T-cell (primary cell): ENCODE measurements at regions of chrX and their contacts with region 1.

Region 1: DNA sequence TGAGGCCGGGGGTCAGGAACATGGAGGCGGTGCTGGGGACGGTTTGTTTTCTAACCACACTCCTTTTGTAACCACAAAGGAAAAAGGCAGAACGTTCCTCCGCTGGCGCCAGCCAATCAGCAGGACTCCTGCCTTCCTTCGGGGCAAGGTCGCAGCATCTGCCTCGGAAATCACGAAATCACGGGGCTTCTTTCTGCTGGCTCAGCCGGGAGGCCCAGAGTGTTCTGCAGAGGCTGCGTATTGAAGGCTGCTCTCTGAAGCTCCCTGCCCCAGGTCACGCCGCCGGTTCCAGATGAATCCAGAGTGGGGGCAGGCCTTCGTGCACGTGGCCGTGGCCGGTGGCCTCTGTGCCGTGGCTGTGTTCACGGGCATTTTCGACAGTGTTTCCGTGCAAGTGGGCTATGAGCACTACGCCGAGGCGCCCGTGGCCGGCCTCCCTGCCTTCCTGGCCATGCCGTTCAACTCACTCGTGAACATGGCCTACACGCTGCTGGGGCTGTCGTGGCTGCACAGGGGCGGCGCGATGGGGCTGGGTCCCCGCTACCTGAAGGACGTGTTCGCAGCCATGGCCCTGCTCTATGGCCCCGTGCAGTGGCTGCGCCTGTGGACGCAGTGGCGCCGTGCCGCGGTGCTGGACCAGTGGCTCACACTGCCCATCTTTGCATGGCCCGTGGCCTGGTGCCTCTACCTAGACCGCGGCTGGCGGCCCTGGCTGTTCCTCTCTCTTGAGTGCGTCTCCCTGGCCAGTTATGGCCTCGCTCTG is 9.4 kb downstream of the TMEM187 start:
- DNase-seq: peak in 34 of 35 experiments; percentile 30 to 74 (median 46)
- ATAC-seq: peak; percentile 54 to 63 (median 58)
- H3K4me3 ChIP-seq: peak overlapping the region in 1 of 2 donors; percentile 25
- H3K4me3 Mint-ChIP-seq: peak overlapping the region; percentile 74 to 77 (median 75)
- H3K27ac ChIP-seq: peak overlapping the region; percentile 93
- H3K27ac Mint-ChIP-seq: peak overlapping the region; percentile 95 to 98
- H3K4me1 ChIP-seq: peaks cover 17 to 70% of the 10 kb centered on the region in 2 experiments
- H3K4me1 Mint-ChIP-seq: peaks cover 34 to 54% (median 45%) of the 10 kb centered on the region in 3 donors
- H3K27me3 ChIP-seq: no peaks in the 10 kb centered on the region
- H3K27me3 Mint-ChIP-seq: peaks cover 0 to 3% of the 10 kb centered on the region in 2 donors

Region 2: DNA sequence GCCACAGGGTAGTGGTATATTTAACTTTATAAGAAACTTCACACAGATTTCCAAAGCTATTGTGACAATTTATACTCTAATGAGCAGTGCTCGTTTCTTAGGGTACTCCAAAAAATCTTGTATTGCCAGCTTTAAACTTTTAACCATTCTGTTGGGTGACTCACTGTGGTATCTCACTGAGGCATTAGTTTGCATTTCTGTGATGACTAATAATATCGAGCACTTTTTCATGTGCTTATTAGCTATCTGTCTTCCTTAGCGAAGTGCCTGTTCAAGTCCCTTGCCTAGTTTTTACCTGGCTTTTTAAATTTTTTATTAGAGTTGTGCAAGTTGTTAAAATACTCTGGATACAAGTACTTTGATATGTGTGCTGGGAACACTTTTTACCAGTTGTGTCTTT is 920.2 kb before region 1 on chrX:
- CTCF ChIA-PET with region 1: no interaction called
- POLR2A ChIA-PET with region 1: no interaction called
- DNase-seq: no peak
- ATAC-seq: no peak
- H3K4me3 ChIP-seq: no peak overlapping the region
- H3K4me3 Mint-ChIP-seq: no peak overlapping the region
- H3K27ac ChIP-seq: no peak overlapping the region
- H3K27ac Mint-ChIP-seq: no peak overlapping the region
- H3K4me1 ChIP-seq: no peaks in the 10 kb centered on the region
- H3K4me1 Mint-ChIP-seq: no peaks in the 10 kb centered on the region
- H3K27me3 ChIP-seq: peaks cover 0 to 6% of the 10 kb centered on the region in 2 experiments
- H3K27me3 Mint-ChIP-seq: peaks cover 0 to 4% of the 10 kb centered on the region in 2 donors

Region 3: DNA sequence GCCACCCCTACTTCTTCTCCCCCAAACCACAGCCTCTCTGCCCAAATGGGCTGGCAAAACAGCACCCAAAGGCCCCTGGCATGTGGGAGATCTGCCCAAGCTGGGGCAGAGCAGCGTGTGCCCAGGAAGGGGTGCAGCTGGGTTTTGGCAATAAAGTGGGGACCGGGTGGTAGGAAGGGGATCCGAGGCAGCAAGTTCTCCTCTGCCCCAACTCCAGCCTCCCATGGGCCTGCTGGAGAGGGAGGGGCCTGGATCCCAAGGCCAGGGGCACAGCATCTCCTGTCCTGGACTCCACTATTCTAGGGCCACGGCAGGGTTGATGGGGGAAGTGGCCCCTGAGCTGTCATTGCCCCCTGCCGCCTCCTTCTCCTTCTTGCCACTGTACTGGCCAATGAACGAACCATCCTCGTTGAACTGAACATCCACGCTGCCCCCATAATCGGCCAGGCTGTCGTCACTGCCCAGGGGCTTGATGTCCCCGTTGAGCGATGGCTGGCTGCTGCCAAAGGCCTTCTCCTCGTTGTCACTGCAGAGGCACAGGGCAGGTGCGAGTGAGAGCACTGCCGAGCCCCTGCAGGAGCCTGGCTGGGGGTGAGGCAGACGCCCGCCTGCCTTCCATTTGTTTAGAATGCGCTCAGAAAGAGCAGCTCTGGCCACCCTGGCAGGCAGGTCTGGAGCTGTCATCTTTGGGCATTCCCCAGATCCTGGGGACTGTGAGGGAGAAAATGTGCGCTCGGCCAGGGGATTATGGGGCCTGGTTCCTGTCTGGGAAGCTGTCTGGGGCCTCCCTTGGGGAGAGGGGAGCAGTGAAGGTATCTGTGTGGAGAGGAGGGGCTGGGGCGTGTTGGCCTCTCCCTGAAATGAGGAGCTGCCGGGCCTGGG is 119.3 kb before region 1 on chrX:
- CTCF ChIA-PET with region 1: no interaction called
- POLR2A ChIA-PET with region 1: no interaction called
- DNase-seq: no peak
- ATAC-seq: no peak
- H3K4me3 ChIP-seq: no peak overlapping the region
- H3K4me3 Mint-ChIP-seq: no peak overlapping the region
- H3K27ac ChIP-seq: no peak overlapping the region
- H3K27ac Mint-ChIP-seq: no peak overlapping the region
- H3K4me1 ChIP-seq: peaks cover 2 to 3% of the 10 kb centered on the region in 2 experiments
- H3K4me1 Mint-ChIP-seq: peaks cover 2 to 4% (median 2%) of the 10 kb centered on the region in 3 donors
- H3K27me3 ChIP-seq: peaks cover 0 to 7% of the 10 kb centered on the region in 2 experiments
- H3K27me3 Mint-ChIP-seq: peaks cover 0 to 14% of the 10 kb centered on the region in 2 donors

Region 4: GRCh38 chrX:153941336-153942252 is 40.4 kb before region 1 on chrX:
- CTCF ChIA-PET with region 1: no interaction called
- POLR2A ChIA-PET with region 1: no interaction called
- DNase-seq: no peak
- ATAC-seq: no peak
- H3K4me3 ChIP-seq: no peak overlapping the region
- H3K4me3 Mint-ChIP-seq: peak overlapping the region; percentile 28 to 48 (median 47)
- H3K27ac ChIP-seq: no peak overlapping the region
- H3K27ac Mint-ChIP-seq: peak overlapping the region; percentile 49 to 59
- H3K4me1 ChIP-seq: peaks cover 3 to 39% of the 10 kb centered on the region in 2 experiments
- H3K4me1 Mint-ChIP-seq: peaks cover 12 to 19% (median 15%) of the 10 kb centered on the region in 3 donors
- H3K27me3 ChIP-seq: no peaks in the 10 kb centered on the region
- H3K27me3 Mint-ChIP-seq: peaks cover 0 to 2% of the 10 kb centered on the region in 2 donors

Region 5: DNA sequence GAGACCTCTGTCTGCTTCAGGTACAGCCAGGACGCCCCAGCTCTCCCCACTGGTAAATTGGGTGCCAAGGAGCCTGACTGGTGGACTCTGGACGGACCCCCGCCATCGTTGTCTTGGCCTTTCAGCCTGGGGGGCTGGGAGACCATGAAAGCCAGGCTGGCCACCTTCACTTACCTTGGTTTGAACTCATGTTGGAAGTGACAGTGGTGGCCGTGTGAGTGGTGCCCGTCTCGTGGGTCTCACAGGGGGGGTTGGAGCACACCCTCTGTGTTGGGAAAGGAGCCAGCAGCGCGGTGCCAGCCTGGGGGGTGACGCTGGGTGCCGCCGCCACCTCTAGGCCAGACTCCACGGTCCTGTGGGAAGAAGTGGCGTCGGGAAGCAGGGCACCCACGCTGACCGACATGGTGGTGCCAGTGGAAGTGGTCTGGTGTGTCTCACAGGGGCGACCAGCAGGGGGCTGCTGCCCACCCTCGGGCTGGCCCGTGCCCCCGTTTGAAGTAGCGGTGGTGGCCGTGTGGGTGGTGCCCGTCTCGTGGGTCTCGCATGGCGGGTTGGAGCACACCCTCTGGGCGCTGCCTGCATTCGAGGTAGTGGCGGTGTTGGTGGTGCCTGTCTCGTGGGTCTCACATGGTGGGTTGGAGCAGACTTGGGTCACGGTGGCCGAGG is 27.9 kb before region 1 on chrX:
- CTCF ChIA-PET with region 1: no interaction called
- POLR2A ChIA-PET with region 1: no interaction called
- DNase-seq: no peak
- ATAC-seq: peak in 1 of 4 experiments; percentile 4
- H3K4me3 ChIP-seq: no peak overlapping the region
- H3K4me3 Mint-ChIP-seq: peak overlapping the region in 1 of 3 donors; percentile 9
- H3K27ac ChIP-seq: peak overlapping the region; percentile 18
- H3K27ac Mint-ChIP-seq: no peak overlapping the region
- H3K4me1 ChIP-seq: peaks cover 0 to 20% of the 10 kb centered on the region in 2 experiments
- H3K4me1 Mint-ChIP-seq: peaks cover 5 to 8% (median 6%) of the 10 kb centered on the region in 3 donors
- H3K27me3 ChIP-seq: no peaks in the 10 kb centered on the region
- H3K27me3 Mint-ChIP-seq: no peaks in the 10 kb centered on the region

Region 6: GRCh38 chrX:154068560-154068959 is 86.6 kb after region 1 on chrX:
- CTCF ChIA-PET with region 1: no interaction called
- POLR2A ChIA-PET with region 1: interaction called, 10 to 12 read pairs
- DNase-seq: no peak
- ATAC-seq: no peak
- H3K4me3 ChIP-seq: no peak overlapping the region
- H3K4me3 Mint-ChIP-seq: no peak overlapping the region
- H3K27ac ChIP-seq: no peak overlapping the region
- H3K27ac Mint-ChIP-seq: no peak overlapping the region
- H3K4me1 ChIP-seq: peaks cover 3 to 51% of the 10 kb centered on the region in 2 experiments
- H3K4me1 Mint-ChIP-seq: peaks cover 58 to 75% (median 60%) of the 10 kb centered on the region in 3 donors
- H3K27me3 ChIP-seq: no peaks in the 10 kb centered on the region
- H3K27me3 Mint-ChIP-seq: peaks cover 0 to 5% of the 10 kb centered on the region in 2 donors

Region 7: GRCh38 chrX:154074199-154074598 is 92.2 kb after region 1 on chrX:
- CTCF ChIA-PET with region 1: no interaction called
- POLR2A ChIA-PET with region 1: interaction called in 1 of 2 experiments, 10 read pairs
- DNase-seq: no peak
- ATAC-seq: no peak
- H3K4me3 ChIP-seq: no peak overlapping the region
- H3K4me3 Mint-ChIP-seq: no peak overlapping the region
- H3K27ac ChIP-seq: no peak overlapping the region
- H3K27ac Mint-ChIP-seq: no peak overlapping the region
- H3K4me1 ChIP-seq: peaks cover 3 to 21% of the 10 kb centered on the region in 2 experiments
- H3K4me1 Mint-ChIP-seq: peaks cover 56 to 73% (median 67%) of the 10 kb centered on the region in 3 donors
- H3K27me3 ChIP-seq: no peaks in the 10 kb centered on the region
- H3K27me3 Mint-ChIP-seq: peaks cover 0 to 10% of the 10 kb centered on the region in 2 donors

Region 8: DNA sequence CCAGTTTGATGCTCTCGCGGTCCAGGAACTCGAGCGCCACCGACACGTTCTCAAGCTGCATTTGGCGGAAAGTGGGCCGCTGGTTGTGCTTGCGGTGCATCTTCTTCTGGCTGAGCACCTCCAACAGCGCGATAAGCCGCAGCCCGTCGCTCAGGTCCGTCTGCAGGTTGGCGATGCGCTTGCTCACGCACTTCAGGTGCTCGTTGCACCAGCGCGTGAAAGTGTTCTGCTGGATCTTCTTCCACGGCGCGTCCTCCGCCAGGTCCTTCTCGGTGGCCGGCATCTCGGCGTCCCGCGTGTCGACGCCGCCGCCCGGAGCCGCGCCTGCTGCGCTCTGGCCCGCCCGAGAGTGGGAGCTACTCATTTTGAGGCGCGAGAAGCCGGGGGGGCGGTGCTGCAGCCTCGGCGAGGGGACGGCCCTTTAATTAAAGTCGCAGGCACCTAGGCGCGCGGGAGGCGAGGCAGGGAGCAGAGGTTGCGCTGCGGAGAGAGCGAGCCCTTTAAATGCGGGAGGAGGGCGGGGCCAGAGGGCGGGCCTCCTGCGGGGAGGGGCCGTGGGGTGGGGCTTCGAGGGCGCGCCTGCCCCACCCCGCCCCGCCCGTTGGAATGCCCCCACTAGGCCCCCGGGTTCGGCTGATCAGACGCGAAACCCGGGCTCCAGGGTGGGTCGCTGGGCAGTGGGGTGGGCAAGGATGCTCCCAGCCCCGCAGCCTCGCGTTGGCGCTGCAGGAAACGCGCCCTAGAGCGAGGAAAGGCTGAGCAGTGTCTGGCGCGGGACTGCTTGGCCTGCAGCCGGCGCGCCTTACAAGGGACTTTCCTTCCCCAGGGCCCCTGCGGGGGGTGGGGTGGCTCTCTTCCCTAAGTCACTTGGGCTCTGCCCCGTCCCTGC is 389.2 kb after region 1 on chrX:
- CTCF ChIA-PET with region 1: no interaction called
- POLR2A ChIA-PET with region 1: interaction called in 1 of 2 experiments, 21 read pairs
- DNase-seq: peak; percentile 80 to 93 (median 88)
- ATAC-seq: peak; percentile 58 to 70 (median 68)
- H3K4me3 ChIP-seq: peak overlapping the region; percentile 76 to 89
- H3K4me3 Mint-ChIP-seq: peak overlapping the region; percentile 80 to 88 (median 83)
- H3K27ac ChIP-seq: peak overlapping the region; percentile 73
- H3K27ac Mint-ChIP-seq: peak overlapping the region; percentile 82 to 84
- H3K4me1 ChIP-seq: peaks cover 7 to 61% of the 10 kb centered on the region in 2 experiments
- H3K4me1 Mint-ChIP-seq: peaks cover 26 to 34% (median 31%) of the 10 kb centered on the region in 3 donors
- H3K27me3 ChIP-seq: no peaks in the 10 kb centered on the region
- H3K27me3 Mint-ChIP-seq: no peaks in the 10 kb centered on the region